ENCODE measurements at regions of chr9 and their contacts with region 1.

Region 1: GRCh38 chr9:123268240-123268949 is at the start of gene STRBP:
- DNase-seq: peak; percentile 97
- H3K4me3 ChIP-seq: peak within 1 kb of the TSS; percentile 98
- H3K27ac ChIP-seq: peak within 1 kb of the TSS; percentile 42
- H3K4me1 ChIP-seq: peaks cover 51% of the 10 kb centered on the region
- CTCF ChIP-seq: no peak
- total RNA-seq, gene STRBP: 82.8 and 96.0 TPM in 2 replicates

Region 2: GRCh38 chr9:123174887-123175518 is 93.4 kb before region 1 on chr9:
- CTCF ChIA-PET with region 1: no interaction called
- POLR2A ChIA-PET with region 1: no interaction called
- intact Hi-C with region 1: loop called (anchors 2 kb)
- DNase-seq: peak; percentile 93
- H3K4me3 ChIP-seq: peak overlapping the region; percentile 55
- H3K27ac ChIP-seq: peak overlapping the region; percentile 99
- H3K4me1 ChIP-seq: peaks cover 99% of the 10 kb centered on the region
- CTCF ChIP-seq: no peak

Region 3: GRCh38 chr9:123251741-123252140 is 16.7 kb before region 1 on chr9:
- CTCF ChIA-PET with region 1: interaction called, 4 read pairs
- POLR2A ChIA-PET with region 1: interaction called, 15 read pairs
- intact Hi-C with region 1: no loop called
- DNase-seq: no peak
- H3K4me3 ChIP-seq: no peak overlapping the region
- H3K27ac ChIP-seq: no peak overlapping the region
- H3K4me1 ChIP-seq: peaks cover 31% of the 10 kb centered on the region
- CTCF ChIP-seq: no peak

Region 4: GRCh38 chr9:123257276-123257675 is 11.1 kb before region 1 on chr9:
- CTCF ChIA-PET with region 1: interaction called, 4 read pairs
- POLR2A ChIA-PET with region 1: interaction called, 15 read pairs
- intact Hi-C with region 1: no loop called
- DNase-seq: no peak
- H3K4me3 ChIP-seq: no peak overlapping the region
- H3K27ac ChIP-seq: no peak overlapping the region
- H3K4me1 ChIP-seq: peaks cover 45% of the 10 kb centered on the region
- CTCF ChIP-seq: no peak

Region 5: DNA sequence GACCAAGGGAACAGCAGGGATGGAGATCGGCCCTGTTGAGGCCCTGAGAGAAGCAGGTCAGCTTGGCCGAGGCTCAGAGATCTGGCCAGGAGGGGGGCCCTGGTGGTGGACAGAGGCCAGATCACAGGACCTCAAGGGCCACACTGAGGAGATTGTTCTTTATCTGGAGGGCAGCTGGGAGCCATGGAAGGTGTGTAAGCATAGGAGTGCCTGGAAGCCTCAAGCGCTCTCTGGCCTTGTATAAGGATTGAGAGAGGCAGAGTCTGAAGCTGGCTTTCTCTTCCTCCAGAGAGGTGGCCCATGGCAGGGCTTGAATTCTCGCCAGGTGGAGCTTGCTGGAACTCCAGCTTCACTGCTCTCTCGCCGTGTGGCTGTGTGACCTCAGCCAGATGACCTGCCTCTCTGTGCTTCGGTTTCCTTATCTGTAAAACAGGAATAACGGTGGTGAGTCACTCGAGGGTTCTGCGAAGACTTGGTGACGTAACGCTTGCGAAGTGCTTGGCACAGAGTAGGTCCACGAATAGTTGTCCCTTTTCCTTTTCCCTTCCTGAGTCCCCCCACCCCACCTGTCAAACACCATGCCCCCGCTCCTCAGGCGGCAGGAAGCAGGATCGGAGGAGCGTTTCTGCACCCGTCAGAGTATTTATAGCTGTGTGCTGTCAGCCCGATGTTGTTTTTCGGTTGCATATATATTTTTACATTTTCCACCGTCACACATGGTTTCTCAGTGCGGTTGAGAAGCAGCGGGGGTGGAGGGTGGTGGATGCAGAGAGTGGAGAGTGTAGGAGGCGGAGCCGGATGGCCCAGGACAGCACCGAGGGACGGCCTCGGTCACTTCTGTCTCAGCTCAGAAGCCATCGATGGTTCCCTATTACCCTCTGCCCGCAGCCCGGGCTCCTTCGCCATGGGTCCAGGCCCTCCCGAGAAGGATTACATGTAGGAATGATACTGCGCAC is 70.6 kb after region 1 on chr9:
- CTCF ChIA-PET with region 1: interaction called, 4 read pairs
- POLR2A ChIA-PET with region 1: interaction called, 5 read pairs
- intact Hi-C with region 1: loop called (anchors 1 kb)
- DNase-seq: peak; percentile 89
- H3K4me3 ChIP-seq: peak overlapping the region; percentile 59
- H3K27ac ChIP-seq: peak overlapping the region; percentile 93
- H3K4me1 ChIP-seq: peaks cover 97% of the 10 kb centered on the region
- CTCF ChIP-seq: no peak

Measured in OCI-LY7 (cell line).